ENCODE measurements at regions of chr19 and their contacts with region 1.

Region 1: DNA sequence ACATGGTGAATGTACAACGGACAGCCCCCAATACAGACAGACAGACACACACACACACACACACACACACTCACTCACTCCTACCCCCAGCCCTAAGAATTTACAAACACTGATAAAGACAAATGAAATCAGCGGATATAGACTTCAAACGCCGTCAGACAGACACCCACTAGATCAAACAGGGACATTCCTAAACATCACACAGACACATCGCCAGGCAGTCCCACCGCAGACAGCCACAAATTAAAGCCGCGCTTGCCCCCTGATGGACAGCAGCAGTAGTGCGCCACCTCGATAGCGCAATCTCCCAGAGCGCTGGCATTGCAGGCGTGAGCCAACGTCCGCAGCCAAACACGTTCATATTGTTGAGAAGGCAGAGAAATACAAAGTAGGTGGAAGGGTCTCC is 24.7 kb upstream of the ADGRE1 start:
- DNase-seq: peak; percentile 89 to 93 (median 90)
- H3K4me3 ChIP-seq: no peak overlapping the region
- H3K4me3 Mint-ChIP-seq: peak overlapping the region; percentile 83 to 90 (median 86)
- H3K27ac ChIP-seq: peak overlapping the region; percentile 48
- H3K27ac Mint-ChIP-seq: peak overlapping the region; percentile 71 to 97 (median 87)
- H3K4me1 ChIP-seq: peaks cover 11% of the 10 kb centered on the region
- H3K4me1 Mint-ChIP-seq: peaks cover 11 to 24% (median 16%) of the 10 kb centered on the region in 4 donors
- H3K27me3 ChIP-seq: no peaks in the 10 kb centered on the region
- H3K27me3 Mint-ChIP-seq: no peaks in the 10 kb centered on the region

Region 2: DNA sequence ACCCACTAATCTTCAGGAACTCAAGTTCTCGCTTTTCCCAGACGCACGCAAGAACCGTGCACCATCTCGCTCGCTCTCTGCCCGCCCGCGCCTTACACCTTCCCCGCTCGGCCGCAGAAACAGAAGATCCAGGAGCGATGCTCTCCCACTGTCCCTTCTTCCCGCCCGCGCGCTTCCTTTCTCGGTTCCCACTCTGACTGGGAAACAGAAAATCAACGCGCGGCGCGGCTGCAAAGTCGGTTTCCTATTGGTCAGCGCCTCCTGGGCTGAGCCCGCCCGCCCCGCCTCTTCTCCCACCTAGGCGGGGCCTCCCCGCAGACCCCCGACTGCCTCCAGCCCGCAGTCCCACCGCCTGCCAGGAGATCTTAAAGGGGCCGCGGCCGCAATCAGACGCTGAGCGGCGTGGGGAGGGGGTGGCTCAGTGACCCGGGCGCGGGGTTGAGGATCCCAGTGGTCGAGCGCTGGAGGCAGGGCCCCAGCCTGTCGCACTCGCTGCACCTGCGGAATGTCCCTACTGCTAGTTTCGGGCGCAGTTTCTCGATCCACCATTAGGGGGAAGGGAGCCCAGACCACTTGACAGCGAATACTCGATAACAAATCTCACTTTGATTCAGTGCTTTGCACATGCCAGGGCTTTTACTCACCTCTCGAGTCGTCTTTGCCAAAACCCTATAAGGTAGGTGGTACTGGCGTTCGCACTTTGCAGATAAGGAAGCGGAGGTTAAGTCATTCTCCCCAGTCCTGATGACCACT is 402.4 kb before region 1 on chr19:
- CTCF ChIA-PET with region 1: no interaction called
- POLR2A ChIA-PET with region 1: no interaction called
- intact Hi-C with region 1: loop called (anchors 1 kb)
- DNase-seq: peak; percentile 97 to 98 (median 97)
- H3K4me3 ChIP-seq: peak overlapping the region; percentile 85 to 90
- H3K4me3 Mint-ChIP-seq: peak overlapping the region; percentile 93 to 99 (median 96)
- H3K27ac ChIP-seq: peak overlapping the region; percentile 70
- H3K27ac Mint-ChIP-seq: peak overlapping the region; percentile 86 to 99 (median 93)
- H3K4me1 ChIP-seq: peaks cover 24% of the 10 kb centered on the region
- H3K4me1 Mint-ChIP-seq: peaks cover 12 to 45% (median 25%) of the 10 kb centered on the region in 4 donors
- H3K27me3 ChIP-seq: no peaks in the 10 kb centered on the region
- H3K27me3 Mint-ChIP-seq: no peaks in the 10 kb centered on the region

Region 3: DNA sequence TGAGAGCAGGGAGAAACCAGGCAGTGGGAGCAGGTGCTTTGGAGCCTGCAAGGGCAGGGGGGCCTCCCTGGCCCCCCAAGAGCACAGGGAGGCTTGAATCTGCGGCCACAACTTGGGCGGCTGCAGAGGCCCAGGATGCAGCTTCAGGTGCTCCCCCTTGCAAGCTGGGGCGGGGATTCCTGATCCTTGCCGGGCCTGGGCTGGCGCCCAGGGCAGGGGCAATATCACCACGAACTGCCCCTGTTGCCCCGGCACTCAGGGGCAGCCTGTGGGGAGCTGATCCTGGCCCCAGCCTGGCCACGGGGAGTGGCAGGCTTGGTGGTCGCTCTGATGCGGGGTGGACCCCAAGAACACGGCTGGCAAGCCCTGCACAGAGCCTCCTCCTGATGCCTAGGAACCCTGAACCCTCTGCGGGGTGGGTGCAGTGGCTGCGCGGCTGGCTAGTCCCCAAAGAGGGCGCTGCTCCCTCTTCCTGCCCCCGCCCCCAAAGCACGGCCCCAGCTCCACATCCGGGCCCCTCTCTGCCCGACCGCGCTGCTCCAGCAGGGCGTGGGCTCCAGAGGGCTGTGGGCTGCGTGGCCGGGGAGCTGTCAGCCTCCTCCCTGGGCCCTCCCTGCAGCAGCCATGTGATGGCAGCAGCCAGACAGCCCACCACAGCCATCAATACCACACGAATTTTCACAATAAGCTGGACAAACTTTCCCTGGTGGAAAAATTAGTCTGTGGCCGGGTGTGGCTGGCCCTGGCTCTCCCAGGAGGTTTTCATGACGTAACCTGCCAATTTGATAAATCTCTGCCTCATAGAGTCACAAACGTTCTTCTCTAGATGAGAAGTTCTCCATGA is 310.8 kb before region 1 on chr19:
- CTCF ChIA-PET with region 1: interaction called, 4 read pairs
- POLR2A ChIA-PET with region 1: no interaction called
- intact Hi-C with region 1: loop called (anchors 1 kb)
- DNase-seq: peak; percentile 50 to 61 (median 59)
- H3K4me3 ChIP-seq: peak overlapping the region in 1 of 2 donors; percentile 14
- H3K4me3 Mint-ChIP-seq: peak overlapping the region in 5 of 8 donors; percentile 6 to 52 (median 33)
- H3K27ac ChIP-seq: no peak overlapping the region
- H3K27ac Mint-ChIP-seq: no peak overlapping the region
- H3K4me1 ChIP-seq: peaks cover 23% of the 10 kb centered on the region
- H3K4me1 Mint-ChIP-seq: peaks cover 4 to 13% (median 5%) of the 10 kb centered on the region in 4 donors
- H3K27me3 ChIP-seq: no peaks in the 10 kb centered on the region
- H3K27me3 Mint-ChIP-seq: peaks cover 0 to under 1% of the 10 kb centered on the region in 2 donors

Region 4: GRCh38 chr19:6610934-6611852 is 251.5 kb before region 1 on chr19:
- CTCF ChIA-PET with region 1: no interaction called
- POLR2A ChIA-PET with region 1: no interaction called
- intact Hi-C with region 1: no loop called
- DNase-seq: no peak
- H3K4me3 ChIP-seq: no peak overlapping the region
- H3K4me3 Mint-ChIP-seq: no peak overlapping the region
- H3K27ac ChIP-seq: no peak overlapping the region
- H3K27ac Mint-ChIP-seq: no peak overlapping the region
- H3K4me1 ChIP-seq: no peaks in the 10 kb centered on the region
- H3K4me1 Mint-ChIP-seq: peaks cover 0 to 6% (median under 1%) of the 10 kb centered on the region in 4 donors
- H3K27me3 ChIP-seq: no peaks in the 10 kb centered on the region
- H3K27me3 Mint-ChIP-seq: peaks cover 18 to 36% of the 10 kb centered on the region in 2 donors

Region 5: DNA sequence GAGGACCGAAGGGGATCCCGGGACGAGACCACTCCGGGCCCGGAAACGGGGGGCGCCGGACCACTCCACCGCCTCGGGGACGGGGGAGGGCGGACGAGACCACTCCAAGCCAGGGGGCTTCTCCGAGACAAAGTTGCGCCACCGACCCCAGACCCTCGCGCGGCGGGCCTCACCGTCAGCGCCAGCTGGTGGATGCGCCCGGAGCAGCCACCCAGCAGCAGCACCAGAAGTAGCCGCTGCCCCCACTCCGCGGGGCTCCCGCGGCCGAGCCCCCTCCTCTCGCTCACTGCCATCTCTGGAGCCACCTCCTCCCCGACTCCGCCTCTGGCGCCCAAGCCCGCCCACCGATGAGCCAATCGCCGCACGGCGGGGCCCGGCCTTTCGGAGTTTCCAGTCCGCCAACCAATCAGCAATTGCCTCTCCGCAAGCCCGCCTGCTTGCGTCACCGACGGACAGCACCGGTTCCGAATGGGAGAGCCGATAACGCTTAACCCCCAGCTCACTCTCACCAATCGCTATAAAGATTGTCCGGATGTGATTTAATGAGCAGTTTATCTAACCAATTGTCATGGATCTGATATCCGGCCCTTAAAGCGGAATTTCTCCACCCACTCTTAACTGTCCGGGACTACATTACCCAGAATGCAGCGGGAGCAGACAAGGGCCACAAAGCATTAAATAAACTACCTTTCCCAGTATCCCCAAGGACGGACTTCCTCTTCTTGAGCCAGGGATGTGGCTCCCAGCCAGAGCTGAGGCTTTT is 125.2 kb before region 1 on chr19 and contains the start of gene GPR108:
- CTCF ChIA-PET with region 1: interaction called, 184 read pairs
- POLR2A ChIA-PET with region 1: interaction called, 130 read pairs
- intact Hi-C with region 1: loop called (anchors 1 kb)
- DNase-seq: peak; percentile 98 to 100 (median 99)
- H3K4me3 ChIP-seq: peak within 1 kb of the TSS; percentile 58 to 80
- H3K4me3 Mint-ChIP-seq: peak within 1 kb of the TSS; percentile 95 to 99 (median 97)
- H3K27ac ChIP-seq: peak within 1 kb of the TSS; percentile 94
- H3K27ac Mint-ChIP-seq: peak within 1 kb of the TSS; percentile 93 to 99 (median 98)
- H3K4me1 ChIP-seq: peaks cover 50% of the 10 kb centered on the region
- H3K4me1 Mint-ChIP-seq: peaks cover 17 to 52% (median 35%) of the 10 kb centered on the region in 4 donors
- H3K27me3 ChIP-seq: no peaks in the 10 kb centered on the region
- H3K27me3 Mint-ChIP-seq: no peaks in the 10 kb centered on the region
- total RNA-seq, gene GPR108: 75.6 to 85.3 TPM

Region 6: DNA sequence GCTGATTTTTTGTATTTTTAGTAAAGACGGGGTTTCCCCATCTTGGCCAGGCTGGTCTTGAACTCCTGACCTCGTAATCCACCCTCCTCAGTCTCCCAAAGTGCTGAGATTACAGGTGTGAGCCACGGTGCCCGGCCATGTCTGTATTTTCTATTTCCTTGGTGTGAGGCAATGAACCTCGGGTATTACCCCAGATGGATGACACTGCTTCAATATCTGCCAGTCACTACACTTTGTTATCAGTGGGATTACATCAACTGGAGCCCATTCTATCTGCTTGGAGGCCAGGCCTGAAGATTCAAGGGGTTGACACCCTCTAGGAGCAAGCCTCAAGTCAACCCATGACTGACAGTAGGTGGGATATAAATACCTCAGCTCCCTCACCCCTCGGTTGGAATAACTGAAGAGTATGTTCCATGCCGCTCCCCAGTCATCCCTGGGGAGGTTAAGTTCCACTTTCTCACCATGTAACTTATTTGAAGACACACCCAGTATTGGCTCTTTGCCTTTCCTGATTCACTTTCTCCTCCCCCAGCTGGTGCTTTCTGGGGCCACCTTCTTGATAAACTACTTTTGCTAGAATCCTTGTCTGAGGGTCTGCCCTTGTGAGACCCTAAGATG is 23.7 kb after region 1 on chr19:
- CTCF ChIA-PET with region 1: interaction called, 51 read pairs
- POLR2A ChIA-PET with region 1: interaction called, 43 read pairs
- intact Hi-C with region 1: loop called (anchors 1 kb)
- DNase-seq: no peak
- H3K4me3 ChIP-seq: no peak overlapping the region
- H3K4me3 Mint-ChIP-seq: no peak overlapping the region
- H3K27ac ChIP-seq: no peak overlapping the region
- H3K27ac Mint-ChIP-seq: peak overlapping the region in 1 of 7 donors; percentile 14
- H3K4me1 ChIP-seq: peaks cover 44% of the 10 kb centered on the region
- H3K4me1 Mint-ChIP-seq: peaks cover 34 to 49% (median 44%) of the 10 kb centered on the region in 4 donors
- H3K27me3 ChIP-seq: no peaks in the 10 kb centered on the region
- H3K27me3 Mint-ChIP-seq: no peaks in the 10 kb centered on the region

Region 7: GRCh38 chr19:6963937-6964336 is 101.3 kb after region 1 on chr19:
- CTCF ChIA-PET with region 1: interaction called, 16 read pairs
- POLR2A ChIA-PET with region 1: no interaction called
- intact Hi-C with region 1: no loop called
- DNase-seq: peak in 4 of 5 donors; percentile 15 to 40 (median 36)
- H3K4me3 ChIP-seq: no peak overlapping the region
- H3K4me3 Mint-ChIP-seq: no peak overlapping the region
- H3K27ac ChIP-seq: no peak overlapping the region
- H3K27ac Mint-ChIP-seq: no peak overlapping the region
- H3K4me1 ChIP-seq: no peaks in the 10 kb centered on the region
- H3K4me1 Mint-ChIP-seq: peaks cover 2 to 7% (median 6%) of the 10 kb centered on the region in 4 donors
- H3K27me3 ChIP-seq: no peaks in the 10 kb centered on the region
- H3K27me3 Mint-ChIP-seq: no peaks in the 10 kb centered on the region

Region 8: DNA sequence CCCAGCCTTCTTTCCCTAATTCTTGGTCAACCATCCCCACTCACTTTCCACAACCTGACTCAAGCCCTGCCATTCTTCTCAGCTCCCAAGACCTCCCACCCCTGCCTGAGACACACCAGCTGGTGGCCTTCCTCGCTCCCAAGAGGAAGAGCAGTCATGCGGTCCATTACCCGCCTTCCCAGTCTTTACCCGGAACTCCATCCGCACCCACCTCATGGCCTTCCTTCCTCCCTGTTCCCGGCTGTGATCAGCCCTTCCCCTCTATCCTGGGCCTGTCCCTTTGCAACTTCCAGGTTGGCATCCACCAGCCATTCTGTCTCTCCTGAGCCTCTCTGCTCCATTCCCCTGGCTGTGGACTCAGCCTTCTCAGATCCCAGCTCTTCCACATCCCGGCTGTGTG is 450.1 kb after region 1 on chr19:
- CTCF ChIA-PET with region 1: no interaction called
- POLR2A ChIA-PET with region 1: no interaction called
- intact Hi-C with region 1: no loop called
- DNase-seq: no peak
- H3K4me3 ChIP-seq: no peak overlapping the region
- H3K4me3 Mint-ChIP-seq: no peak overlapping the region
- H3K27ac ChIP-seq: no peak overlapping the region
- H3K27ac Mint-ChIP-seq: peak overlapping the region in 1 of 7 donors; percentile 55
- H3K4me1 ChIP-seq: no peaks in the 10 kb centered on the region
- H3K4me1 Mint-ChIP-seq: peaks cover 0 to 1% (median 0%) of the 10 kb centered on the region in 4 donors
- H3K27me3 ChIP-seq: no peaks in the 10 kb centered on the region
- H3K27me3 Mint-ChIP-seq: peaks cover 3% of the 10 kb centered on the region in 2 donors

Region 9: DNA sequence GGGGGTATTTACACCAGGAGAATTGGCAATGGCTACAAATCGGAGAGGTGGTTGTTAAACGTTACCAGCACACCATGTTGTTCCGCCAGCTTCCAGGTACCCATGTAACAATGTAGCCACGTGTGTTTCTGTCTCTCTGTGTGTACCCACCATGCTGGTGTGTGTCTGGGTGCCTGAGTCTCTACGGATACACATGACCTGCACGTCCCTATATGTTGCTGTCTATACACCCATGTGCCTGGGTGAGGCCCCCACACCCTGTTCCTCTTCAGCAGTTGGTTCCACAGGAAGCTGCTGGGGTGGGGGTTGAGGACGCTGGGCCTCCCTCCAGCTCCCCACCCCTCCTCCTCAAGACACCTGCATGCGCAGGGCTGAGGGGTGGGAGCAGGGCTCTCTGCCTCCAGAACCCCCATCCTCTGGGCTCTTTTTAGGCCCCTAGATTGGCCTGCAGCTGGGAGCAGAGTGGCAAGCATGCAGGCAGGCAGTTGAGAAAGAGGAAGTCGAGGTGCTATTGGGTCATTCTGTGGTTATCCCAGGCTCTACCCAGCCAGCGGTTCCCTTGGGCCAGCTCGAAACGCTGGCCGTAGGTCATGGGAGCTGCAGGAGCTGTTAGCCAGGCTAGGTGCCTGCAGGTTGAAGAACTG is 486.0 kb after region 1 on chr19 and contains the start of gene ARHGEF18:
- CTCF ChIA-PET with region 1: no interaction called
- POLR2A ChIA-PET with region 1: no interaction called
- intact Hi-C with region 1: no loop called
- DNase-seq: peak; percentile 62 to 75 (median 71)
- H3K4me3 ChIP-seq: peak within 1 kb of the TSS; percentile 96 to 100
- H3K4me3 Mint-ChIP-seq: peak within 1 kb of the TSS; percentile 93 to 100 (median 98)
- H3K27ac ChIP-seq: peak within 1 kb of the TSS; percentile 74
- H3K27ac Mint-ChIP-seq: peak within 1 kb of the TSS; percentile 89 to 99 (median 95)
- H3K4me1 ChIP-seq: peaks cover 77% of the 10 kb centered on the region
- H3K4me1 Mint-ChIP-seq: peaks cover 39 to 81% (median 58%) of the 10 kb centered on the region in 4 donors
- H3K27me3 ChIP-seq: no peaks in the 10 kb centered on the region
- H3K27me3 Mint-ChIP-seq: no peaks in the 10 kb centered on the region
- total RNA-seq, gene ARHGEF18: 82.3 to 83.8 TPM

Region 10: DNA sequence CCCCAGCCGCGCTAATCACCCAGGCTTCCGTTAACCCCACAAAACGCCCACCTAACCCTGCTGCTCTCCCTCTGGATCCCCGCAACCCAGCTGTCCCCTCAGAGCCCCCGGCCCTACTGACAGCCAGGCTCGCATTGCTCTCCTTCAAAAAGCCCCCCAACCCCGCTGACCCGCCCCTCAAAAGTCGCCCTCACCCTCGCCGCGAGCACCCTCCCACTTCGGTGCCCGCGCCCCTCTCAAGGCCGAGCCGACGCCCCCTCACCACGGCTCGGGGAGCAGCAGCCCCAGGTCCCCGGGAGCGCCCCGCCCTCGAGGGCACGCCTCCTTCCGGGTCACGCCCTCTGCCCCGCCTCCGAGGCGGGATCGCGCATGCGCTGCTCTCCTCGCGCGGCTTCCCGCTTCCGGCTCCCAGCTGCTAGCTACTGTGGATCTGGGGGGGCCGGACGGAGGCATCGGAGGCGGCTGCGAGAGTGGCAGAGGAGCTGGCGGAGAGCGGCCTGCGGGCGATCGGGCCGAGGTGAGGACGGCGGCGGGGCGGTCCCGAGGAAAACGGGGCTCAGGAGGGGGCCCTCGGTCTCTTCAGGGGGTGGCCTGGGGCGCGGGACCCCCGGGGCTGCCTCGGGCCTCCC is 532.2 kb after region 1 on chr19:
- CTCF ChIA-PET with region 1: no interaction called
- POLR2A ChIA-PET with region 1: no interaction called
- intact Hi-C with region 1: no loop called
- DNase-seq: peak; percentile 88 to 95 (median 90)
- H3K4me3 ChIP-seq: peak overlapping the region in 1 of 2 donors; percentile 57
- H3K4me3 Mint-ChIP-seq: peak overlapping the region; percentile 84 to 92 (median 87)
- H3K27ac ChIP-seq: peak overlapping the region; percentile 58
- H3K27ac Mint-ChIP-seq: peak overlapping the region; percentile 78 to 96 (median 93)
- H3K4me1 ChIP-seq: peaks cover 46% of the 10 kb centered on the region
- H3K4me1 Mint-ChIP-seq: peaks cover 26 to 56% (median 34%) of the 10 kb centered on the region in 4 donors
- H3K27me3 ChIP-seq: no peaks in the 10 kb centered on the region
- H3K27me3 Mint-ChIP-seq: no peaks in the 10 kb centered on the region